Activated T-helper 2 cell treated with anti-CD3 and anti-CD28 coated beads, Interferon-gamma antibody, Interleukin-2, Interleukin-4, amounts not matched to agents 10 μg/mL and 5 μg/mL and 100 μg/mL, durations not matched to agents 14 hours and 24 hours and 36 hours (primary cell): ENCODE measurements at regions of chr5 and their contacts with region 1.

Region 1: DNA sequence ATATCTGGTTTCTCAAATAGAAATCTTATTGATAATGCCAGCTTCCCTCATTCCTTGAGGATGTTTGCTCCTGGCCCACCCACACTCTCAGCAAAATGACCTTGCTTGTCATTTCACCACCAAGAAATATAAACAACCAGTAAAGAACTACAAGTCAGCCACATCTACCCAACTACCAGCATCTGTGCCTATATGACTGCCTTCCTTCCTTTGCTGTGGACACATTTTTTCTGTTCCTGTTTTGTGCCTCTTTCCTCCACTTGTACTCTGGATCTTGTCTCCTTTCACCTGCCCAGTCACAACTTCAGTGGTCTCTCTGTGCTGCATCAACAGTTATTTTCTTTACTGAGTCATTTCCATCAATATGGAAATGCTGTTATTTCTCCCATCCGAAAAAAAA is 20.3 kb downstream of the KIF2A start:
- DNase-seq: no peak
- H3K4me3 Mint-ChIP-seq: no peak overlapping the region
- H3K27ac Mint-ChIP-seq: peak overlapping the region; percentile 68
- H3K4me1 Mint-ChIP-seq: peaks cover 56% of the 10 kb centered on the region
- H3K27me3 Mint-ChIP-seq: no peaks in the 10 kb centered on the region

Region 2: DNA sequence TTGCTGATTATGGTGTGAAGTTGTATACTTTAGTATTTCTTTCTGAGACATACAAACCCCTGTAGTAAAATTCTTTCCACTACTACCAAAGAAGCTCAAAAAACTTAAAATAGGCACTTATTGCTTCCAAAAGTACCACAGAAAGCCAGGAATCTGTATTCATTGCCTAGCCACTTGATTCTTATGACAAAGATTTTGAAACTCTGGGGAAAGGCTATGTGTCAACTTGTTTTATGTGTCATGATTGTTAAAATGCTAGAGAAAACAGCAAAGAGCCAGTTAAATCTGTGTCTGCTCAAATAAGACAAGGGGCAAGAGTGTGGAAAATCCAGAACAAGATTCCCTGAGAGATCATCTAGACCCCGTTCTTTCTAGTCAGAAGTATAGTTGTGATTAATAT is 14.3 kb before region 1 on chr5:
- intact Hi-C with region 1: loop called (anchors 2 kb)
- DNase-seq: no peak
- H3K4me3 Mint-ChIP-seq: peak overlapping the region; percentile 74
- H3K27ac Mint-ChIP-seq: peak overlapping the region; percentile 72
- H3K4me1 Mint-ChIP-seq: peaks cover 73% of the 10 kb centered on the region
- H3K27me3 Mint-ChIP-seq: no peaks in the 10 kb centered on the region

Region 3: DNA sequence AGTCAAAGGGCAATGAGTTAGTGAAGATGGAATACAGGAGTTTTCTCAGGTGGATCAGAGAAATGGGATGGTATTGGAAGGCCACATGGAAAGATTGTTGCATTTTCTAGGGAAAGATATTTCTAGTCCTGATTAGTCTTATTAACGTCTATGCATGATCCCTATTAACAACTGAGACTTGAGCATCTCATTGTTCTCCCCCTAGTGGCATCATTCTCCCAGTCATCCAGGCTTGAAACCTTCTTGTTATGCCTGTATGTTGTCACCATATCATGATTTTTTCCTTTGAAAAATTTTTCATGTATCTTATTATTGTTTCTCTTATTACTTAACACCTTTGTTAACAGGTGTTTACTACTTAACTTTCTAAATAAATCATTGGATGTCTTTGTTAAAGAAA is 14.1 kb after region 1 on chr5:
- intact Hi-C with region 1: loop called (anchors 2 kb)
- DNase-seq: no peak
- H3K4me3 Mint-ChIP-seq: no peak overlapping the region
- H3K27ac Mint-ChIP-seq: peak overlapping the region; percentile 17
- H3K4me1 Mint-ChIP-seq: peaks cover 57% of the 10 kb centered on the region
- H3K27me3 Mint-ChIP-seq: no peaks in the 10 kb centered on the region

Region 4: DNA sequence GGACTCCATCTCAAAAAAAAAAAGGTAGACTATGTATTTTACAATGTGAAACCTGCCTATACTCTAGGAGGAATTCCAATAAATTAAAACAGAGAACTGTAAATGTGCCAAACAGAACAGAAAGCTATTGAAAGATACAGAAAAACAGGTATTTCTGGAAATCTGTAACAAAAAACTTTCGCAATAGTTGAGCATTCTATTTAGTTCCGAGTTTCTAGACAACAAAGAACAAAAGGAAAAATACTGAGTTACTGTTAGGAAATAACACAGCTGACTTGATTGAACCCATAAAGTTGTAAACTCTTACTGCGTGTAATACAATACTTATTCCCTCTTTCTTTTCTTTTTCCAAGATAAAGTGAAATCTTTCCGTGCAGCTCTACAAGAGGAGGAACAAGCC is 58.8 kb after region 1 on chr5:
- intact Hi-C with region 1: no loop called
- DNase-seq: no peak
- H3K4me3 Mint-ChIP-seq: no peak overlapping the region
- H3K27ac Mint-ChIP-seq: no peak overlapping the region
- H3K4me1 Mint-ChIP-seq: peaks cover 3% of the 10 kb centered on the region
- H3K27me3 Mint-ChIP-seq: no peaks in the 10 kb centered on the region